ENCODE measurements at regions of chr18 and their contacts with region 1.

Region 1: GRCh38 chr18:25279133-25279532 is 72.8 kb downstream of the ZNF521 start:
- DNase-seq: no peak
- ATAC-seq: no peak
- H3K4me3 ChIP-seq: no peak overlapping the region
- H3K27ac ChIP-seq: no peak overlapping the region
- H3K4me1 ChIP-seq: peaks cover 0 to 61% (median 35%) of the 10 kb centered on the region in 12 donors
- H3K27me3 ChIP-seq: no peaks in the 10 kb centered on the region
- CTCF ChIP-seq: no peak
- POLR2A ChIP-seq: no peak

Region 2: DNA sequence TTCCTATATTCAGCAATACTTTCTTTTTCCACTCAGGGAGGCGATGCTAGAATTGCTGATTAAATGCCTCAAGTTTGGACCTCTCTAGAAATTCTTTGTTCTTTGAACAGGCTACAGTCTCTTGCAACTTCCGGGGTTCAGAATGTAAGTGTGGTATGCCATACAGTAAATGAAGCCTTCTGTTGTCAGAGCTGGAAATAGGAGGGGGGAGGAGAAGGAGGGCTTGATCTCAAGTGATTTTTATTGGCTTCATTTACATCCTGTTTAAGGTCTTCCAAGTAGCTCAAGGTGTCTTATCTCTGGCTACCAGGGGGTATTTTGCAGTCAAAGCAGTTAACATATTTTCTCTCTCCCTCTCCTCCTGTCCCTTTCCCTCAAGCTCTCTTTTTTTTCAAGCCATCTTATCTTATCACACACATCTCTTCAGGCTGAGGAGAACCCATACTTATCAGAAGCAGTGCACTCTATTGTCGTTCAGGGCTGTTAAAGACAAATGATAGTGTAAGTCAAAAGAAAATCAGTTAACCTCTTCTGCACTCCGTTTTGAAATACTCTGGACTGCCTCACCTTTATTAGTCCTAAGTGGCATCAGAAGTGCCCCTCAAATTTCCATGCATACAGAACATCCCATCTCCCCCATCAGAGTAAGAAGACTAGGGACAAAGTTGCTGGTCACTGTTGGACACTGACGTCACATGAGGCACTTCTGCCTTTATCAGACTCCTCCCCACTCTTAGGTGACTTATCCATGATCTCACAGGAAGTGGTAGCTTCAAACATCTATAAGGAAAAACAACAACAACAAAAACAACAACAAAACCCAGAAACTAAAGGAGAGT is 39.3 kb before region 1 on chr18:
- intact Hi-C with region 1: loop called in 6 of 10 experiments (anchors 5 to 10 kb)
- DNase-seq: no peak
- ATAC-seq: peak in 2 of 4 donors; percentile 6 to 22
- H3K4me3 ChIP-seq: no peak overlapping the region
- H3K27ac ChIP-seq: peak overlapping the region in 2 of 12 donors; percentile 9 to 55
- H3K4me1 ChIP-seq: peaks cover 0 to 50% (median 15%) of the 10 kb centered on the region in 12 donors
- H3K27me3 ChIP-seq: no peaks in the 10 kb centered on the region
- CTCF ChIP-seq: no peak
- POLR2A ChIP-seq: no peak

Region 3: GRCh38 chr18:25467226-25467987 is 188.3 kb after region 1 on chr18:
- intact Hi-C with region 1: no loop called
- DNase-seq: peak; percentile 59 to 87 (median 78)
- ATAC-seq: peak; percentile 98 to 99 (median 98)
- H3K4me3 ChIP-seq: no peak overlapping the region
- H3K27ac ChIP-seq: peak overlapping the region in 10 of 12 donors; percentile 18 to 64 (median 38)
- H3K4me1 ChIP-seq: peaks cover 0 to 27% (median 7%) of the 10 kb centered on the region in 12 donors
- H3K27me3 ChIP-seq: no peaks in the 10 kb centered on the region
- CTCF ChIP-seq: no peak
- POLR2A ChIP-seq: no peak

Measured in heart left ventricle (tissue), 16 donors.